IMR-90 (cell line): ENCODE measurements at regions of chr15 and their contacts with region 1.

Region 1: DNA sequence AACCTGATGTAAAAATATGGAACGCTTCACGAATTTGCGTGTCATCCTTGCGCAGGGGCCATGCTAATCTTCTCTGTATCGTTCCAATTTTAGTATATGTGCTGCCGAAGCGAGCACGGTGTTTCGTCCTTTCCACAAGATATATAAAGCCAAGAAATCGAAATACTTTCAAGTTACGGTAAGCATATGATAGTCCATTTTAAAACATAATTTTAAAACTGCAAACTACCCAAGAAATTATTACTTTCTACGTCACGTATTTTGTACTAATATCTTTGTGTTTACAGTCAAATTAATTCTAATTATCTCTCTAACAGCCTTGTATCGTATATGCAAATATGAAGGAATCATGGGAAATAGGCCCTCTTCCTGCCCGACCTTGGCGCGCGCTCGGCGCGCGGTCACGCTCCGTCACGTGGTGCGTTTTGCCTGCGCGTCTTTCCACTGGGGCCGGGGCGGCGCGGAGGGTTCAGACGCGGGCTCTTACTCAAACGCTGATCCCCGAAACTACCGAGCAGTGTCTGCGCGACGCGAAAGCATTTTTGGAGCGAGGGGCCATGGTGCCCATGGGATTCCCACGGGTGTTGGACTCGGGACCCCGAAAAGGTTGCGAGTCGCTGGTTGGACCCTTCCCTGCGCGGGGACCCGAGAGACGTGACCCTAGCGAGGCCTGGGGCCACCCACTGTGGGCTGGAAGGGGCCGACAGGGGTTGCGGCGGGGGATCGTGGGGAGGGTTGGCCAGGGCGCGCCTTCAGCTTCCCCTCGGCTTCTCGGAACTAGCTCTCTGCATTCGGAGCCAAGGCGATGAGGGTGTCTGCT is at the start of gene RNU6-1:
- DNase-seq: peak; percentile 91
- ATAC-seq: peak; percentile 81
- H3K4me3 ChIP-seq: peak within 1 kb of the TSS; percentile 74
- H3K27ac ChIP-seq: peak within 1 kb of the TSS; percentile 96
- H3K4me1 ChIP-seq: peaks cover 15% of the 10 kb centered on the region; the same call in 1 of the 2 replicates
- H3K27me3 ChIP-seq: peaks cover 23% of the 10 kb centered on the region
- CTCF ChIP-seq: no peak
- POLR2A ChIP-seq: peak; percentile 49; the same call in 1 of the 2 replicates
- RAD21 ChIP-seq: no peak
- total RNA-seq, gene RNU6-1: not detected in 2 replicates

Region 2: DNA sequence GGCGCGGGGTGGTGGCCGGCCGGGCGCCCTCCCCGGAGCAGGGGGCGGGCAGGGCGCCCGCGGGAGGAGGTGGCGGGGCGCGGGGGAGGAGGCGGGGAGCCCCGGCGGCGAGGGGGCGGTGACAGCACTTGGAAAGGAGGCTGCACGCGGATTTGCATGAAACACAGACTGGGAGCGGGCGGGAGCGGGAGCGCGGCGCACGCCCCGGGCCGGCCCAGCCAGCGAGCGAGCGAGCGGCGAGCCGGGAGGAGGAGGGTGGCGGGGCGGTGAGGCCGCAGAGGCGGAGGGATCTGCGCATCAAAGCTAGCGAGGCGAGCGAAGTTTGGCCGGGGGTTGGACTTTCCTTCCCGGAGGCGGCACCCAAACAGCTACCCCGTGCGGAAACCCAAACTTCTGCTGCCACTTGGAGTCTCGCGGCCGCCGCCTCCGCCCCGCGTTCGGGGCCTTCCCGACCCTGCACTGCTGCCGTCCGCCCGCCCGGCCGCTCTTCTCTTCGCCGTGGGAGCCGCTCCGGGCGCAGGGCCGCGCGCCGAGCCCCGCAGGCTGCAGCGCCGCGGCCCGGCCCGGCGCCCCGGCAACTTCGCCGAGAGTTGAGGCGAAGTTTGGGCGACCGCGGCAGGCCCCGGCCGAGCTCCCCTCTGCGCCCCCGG is 774.6 kb before region 1 on chr15 and contains the start of gene SMAD3:
- CTCF ChIA-PET with region 1: no interaction called
- POLR2A ChIA-PET with region 1: no interaction called
- dilution Hi-C with region 1: no loop called
- in situ Hi-C with region 1: no loop called
- intact Hi-C with region 1: loop called (anchors 10 kb)
- DNase-seq: peak; percentile 95
- ATAC-seq: peak; percentile 86
- H3K4me3 ChIP-seq: peak within 1 kb of the TSS; percentile 96
- H3K27ac ChIP-seq: peak within 1 kb of the TSS; percentile 92
- H3K4me1 ChIP-seq: peaks cover 12% of the 10 kb centered on the region
- H3K27me3 ChIP-seq: no peaks in the 10 kb centered on the region
- CTCF ChIP-seq: peak; percentile 3; the same call in 1 of the 2 replicates
- POLR2A ChIP-seq: peak; percentile 97
- RAD21 ChIP-seq: peak; percentile 48
- total RNA-seq, gene SMAD3: 71.0 and 71.1 TPM in 2 replicates

Region 3: GRCh38 chr15:67303490-67304363 is 536.4 kb before region 1 on chr15:
- CTCF ChIA-PET with region 1: no interaction called
- POLR2A ChIA-PET with region 1: no interaction called
- dilution Hi-C with region 1: no loop called
- in situ Hi-C with region 1: no loop called
- intact Hi-C with region 1: loop called (anchors 10 kb)
- DNase-seq: peak; percentile 55
- ATAC-seq: 0 out of 2 replicates have a peak, but pooled peaks have one; percentile 32
- H3K4me3 ChIP-seq: no peak overlapping the region
- H3K27ac ChIP-seq: no peak overlapping the region
- H3K4me1 ChIP-seq: peaks cover 2% of the 10 kb centered on the region; the same call in 1 of the 2 replicates
- H3K27me3 ChIP-seq: no peaks in the 10 kb centered on the region
- CTCF ChIP-seq: peak; percentile 59
- POLR2A ChIP-seq: no peak
- RAD21 ChIP-seq: peak; percentile 71

Region 4: DNA sequence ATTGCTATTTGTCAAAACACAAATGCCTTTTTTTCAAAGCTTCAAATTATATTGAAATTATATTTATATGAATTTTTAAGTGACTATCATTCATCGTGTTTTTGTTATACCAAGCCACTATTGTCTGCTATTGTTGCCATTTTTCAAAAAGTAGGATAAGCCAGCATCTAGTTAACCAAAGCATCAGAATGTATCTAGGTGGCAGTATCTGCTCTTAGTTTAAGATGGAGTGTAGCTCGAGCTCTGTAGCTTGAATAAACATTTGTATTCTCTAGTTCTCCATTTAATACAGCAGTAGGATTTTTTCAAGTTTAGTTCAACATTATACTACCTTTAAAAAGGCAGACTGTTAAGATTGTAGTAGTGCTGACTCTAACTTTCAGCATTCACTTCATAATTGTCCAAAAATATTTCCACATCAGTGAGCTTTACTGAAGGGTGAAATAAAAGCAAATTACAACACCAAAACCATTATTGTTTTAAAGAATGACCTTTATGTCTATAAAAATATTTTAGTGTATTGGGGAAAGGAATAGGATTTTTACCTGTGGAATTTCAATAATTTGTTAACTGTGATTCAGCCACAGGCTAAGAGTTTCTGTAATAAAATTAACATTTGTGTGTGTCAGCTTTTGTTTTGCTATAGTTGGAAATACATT is 338.8 kb before region 1 on chr15:
- CTCF ChIA-PET with region 1: interaction called, 4 read pairs
- POLR2A ChIA-PET with region 1: no interaction called
- dilution Hi-C with region 1: no loop called
- in situ Hi-C with region 1: no loop called
- intact Hi-C with region 1: loop called (anchors 2 kb)
- DNase-seq: peak; percentile 54
- ATAC-seq: peak; percentile 85
- H3K4me3 ChIP-seq: no peak overlapping the region
- H3K27ac ChIP-seq: no peak overlapping the region
- H3K4me1 ChIP-seq: no peaks in the 10 kb centered on the region
- H3K27me3 ChIP-seq: no peaks in the 10 kb centered on the region
- CTCF ChIP-seq: peak; percentile 58
- POLR2A ChIP-seq: no peak
- RAD21 ChIP-seq: peak; percentile 62

Region 5: DNA sequence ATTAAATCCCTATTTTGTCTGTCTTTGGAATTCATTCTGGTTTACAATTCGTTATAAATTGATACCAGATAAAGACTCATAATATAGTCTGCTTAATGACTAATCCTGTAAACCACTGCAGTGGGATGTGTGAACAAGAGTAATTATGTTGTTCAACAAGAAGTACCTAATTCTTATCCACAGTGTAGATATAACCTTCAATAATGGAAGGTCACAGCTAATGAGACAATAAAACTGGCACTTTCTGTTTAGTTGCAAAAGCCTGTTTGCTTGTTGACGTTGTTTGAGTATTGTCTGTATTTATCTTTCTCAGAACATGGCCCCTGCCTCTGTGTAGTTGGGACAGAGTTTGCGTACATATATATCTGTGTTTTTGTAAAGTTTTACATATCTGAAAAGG is 240.6 kb after region 1 on chr15:
- CTCF ChIA-PET with region 1: no interaction called
- POLR2A ChIA-PET with region 1: no interaction called
- dilution Hi-C with region 1: no loop called
- in situ Hi-C with region 1: no loop called
- intact Hi-C with region 1: no loop called
- DNase-seq: no peak
- ATAC-seq: no peak
- H3K4me3 ChIP-seq: no peak overlapping the region
- H3K27ac ChIP-seq: no peak overlapping the region
- H3K4me1 ChIP-seq: no peaks in the 10 kb centered on the region; the same call in 1 of the 2 replicates
- H3K27me3 ChIP-seq: no peaks in the 10 kb centered on the region
- CTCF ChIP-seq: no peak
- POLR2A ChIP-seq: no peak
- RAD21 ChIP-seq: no peak

Region 6: DNA sequence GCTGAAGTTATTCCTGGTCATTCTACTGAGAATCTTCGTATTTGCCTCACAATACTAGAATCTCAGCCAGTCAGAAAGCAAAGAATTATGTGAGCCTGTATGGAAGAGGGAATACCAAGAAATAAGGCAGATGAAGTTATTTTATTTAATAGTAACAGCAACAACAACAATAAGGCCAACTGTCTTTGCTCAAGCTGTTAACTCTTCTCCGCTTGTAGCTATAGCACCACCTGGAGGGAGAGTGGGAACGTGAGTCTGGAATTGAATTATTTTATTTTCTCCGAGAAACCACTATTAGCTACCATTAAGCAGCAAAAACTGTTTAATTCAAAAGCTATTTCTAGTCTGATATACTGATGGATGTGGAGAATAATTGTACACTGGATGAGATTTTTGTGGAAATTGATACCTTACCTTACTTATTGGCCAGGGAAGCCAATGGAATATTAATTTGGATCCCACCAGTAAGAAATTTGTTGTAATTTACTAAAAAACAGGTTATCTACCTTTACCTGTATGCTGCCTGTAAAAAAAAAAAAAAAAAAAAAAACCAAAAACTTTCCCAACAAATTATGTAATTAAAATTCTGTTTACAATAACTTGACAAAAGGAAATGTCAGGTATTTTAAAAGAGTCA is 314.9 kb after region 1 on chr15:
- CTCF ChIA-PET with region 1: interaction called, 3 read pairs
- POLR2A ChIA-PET with region 1: no interaction called
- dilution Hi-C with region 1: no loop called
- in situ Hi-C with region 1: no loop called
- intact Hi-C with region 1: loop called (anchors 2 kb)
- DNase-seq: peak; percentile 70
- ATAC-seq: peak; percentile 54
- H3K4me3 ChIP-seq: no peak overlapping the region
- H3K27ac ChIP-seq: no peak overlapping the region
- H3K4me1 ChIP-seq: no peaks in the 10 kb centered on the region
- H3K27me3 ChIP-seq: no peaks in the 10 kb centered on the region
- CTCF ChIP-seq: peak; percentile 80
- POLR2A ChIP-seq: no peak
- RAD21 ChIP-seq: peak; percentile 91